ENCODE measurements at regions of chr6 and their contacts with region 1.

Region 1: GRCh38 chr6:30453508-30454116 is 35.7 kb upstream of the HLA-E start:
- DNase-seq: peak; percentile 80 to 85
- H3K4me3 ChIP-seq: no peak overlapping the region
- H3K4me3 Mint-ChIP-seq: no peak overlapping the region
- H3K27ac Mint-ChIP-seq: no peak overlapping the region
- H3K4me1 ChIP-seq: no peaks in the 10 kb centered on the region
- H3K4me1 Mint-ChIP-seq: no peaks in the 10 kb centered on the region
- H3K27me3 ChIP-seq: no peaks in the 10 kb centered on the region
- H3K27me3 Mint-ChIP-seq: peaks cover 32% of the 10 kb centered on the region
- CTCF ChIP-seq: peak; percentile 87 to 88

Region 2: DNA sequence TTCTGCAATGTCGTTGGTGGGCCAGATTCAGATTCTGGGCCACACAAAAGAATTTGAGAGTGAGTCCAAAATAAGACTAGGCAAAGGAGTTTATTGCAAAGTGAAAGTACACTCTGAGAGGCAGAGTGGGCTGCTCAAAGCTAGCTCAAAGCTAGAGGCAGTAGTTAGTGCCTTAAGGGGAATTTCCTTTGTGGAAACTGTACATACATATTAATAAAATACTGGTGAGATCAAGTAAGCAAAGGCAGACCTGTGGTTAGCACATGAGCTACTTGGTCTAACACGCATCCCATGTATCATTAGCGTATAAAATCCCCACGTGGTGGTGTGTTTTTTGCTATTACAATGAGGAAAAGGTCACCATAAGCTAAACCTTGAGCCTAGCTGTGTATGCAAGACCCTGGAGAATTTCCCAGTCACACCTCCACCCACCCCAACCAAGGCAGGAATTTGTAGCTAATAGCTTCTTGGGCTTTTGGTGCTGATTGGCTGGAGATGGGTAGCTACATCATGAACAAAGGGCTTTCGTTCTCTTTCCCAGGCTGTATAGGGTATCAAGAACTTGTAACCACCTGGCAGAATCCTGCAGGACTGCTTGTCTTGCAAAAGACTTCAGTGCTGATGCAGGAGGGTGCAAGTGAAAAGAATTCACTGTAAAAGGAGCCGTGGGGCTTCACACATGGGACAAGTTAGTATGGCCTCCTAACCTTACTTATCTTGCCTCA is 225.7 kb before region 1 on chr6:
- CTCF ChIA-PET with region 1: no interaction called
- POLR2A ChIA-PET with region 1: no interaction called
- intact Hi-C with region 1: no loop called
- DNase-seq: no peak
- H3K4me3 ChIP-seq: no peak overlapping the region
- H3K4me3 Mint-ChIP-seq: no peak overlapping the region
- H3K27ac Mint-ChIP-seq: no peak overlapping the region
- H3K4me1 ChIP-seq: no peaks in the 10 kb centered on the region
- H3K4me1 Mint-ChIP-seq: no peaks in the 10 kb centered on the region
- H3K27me3 ChIP-seq: no peaks in the 10 kb centered on the region
- H3K27me3 Mint-ChIP-seq: peaks cover 11% of the 10 kb centered on the region
- CTCF ChIP-seq: no peak

Region 3: DNA sequence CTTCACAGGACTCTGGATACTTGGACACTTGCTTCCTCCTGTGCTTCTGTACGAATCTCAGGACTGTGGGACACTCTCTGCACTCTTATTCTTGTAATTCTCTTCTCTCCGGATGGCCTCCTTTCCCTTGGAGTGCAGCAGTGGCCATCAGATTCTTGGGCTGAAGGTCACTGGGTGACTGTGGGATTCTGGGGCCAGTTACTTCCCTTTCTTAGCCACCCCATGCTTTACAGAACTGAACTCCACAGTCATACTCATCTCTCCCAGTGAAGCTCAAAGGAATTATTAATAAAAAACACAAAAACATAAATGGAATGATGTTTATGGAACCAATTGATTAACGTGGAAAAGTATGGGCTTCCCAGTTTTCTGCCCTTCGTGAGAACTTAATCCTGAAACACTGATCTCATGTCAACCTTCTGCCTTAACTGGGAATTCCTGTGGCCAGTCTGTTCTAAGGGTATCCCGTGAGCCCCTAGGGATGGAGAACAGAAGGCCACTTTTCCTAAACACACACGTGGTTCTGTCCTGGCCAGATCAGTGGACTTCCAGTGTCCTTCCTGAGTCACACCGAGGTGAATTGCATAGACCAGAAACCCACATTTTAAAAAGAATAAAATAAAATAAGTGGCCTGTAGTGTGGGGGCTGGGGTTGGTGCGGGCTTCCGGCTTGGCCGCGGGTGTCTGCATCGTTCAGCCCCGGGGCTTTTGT is 12.1 kb after region 1 on chr6:
- CTCF ChIA-PET with region 1: interaction called, 11 read pairs
- POLR2A ChIA-PET with region 1: no interaction called
- intact Hi-C with region 1: no loop called
- DNase-seq: no peak
- H3K4me3 ChIP-seq: no peak overlapping the region; the same call in 1 of the 2 replicates
- H3K4me3 Mint-ChIP-seq: peak overlapping the region; percentile 84
- H3K27ac Mint-ChIP-seq: no peak overlapping the region
- H3K4me1 ChIP-seq: no peaks in the 10 kb centered on the region
- H3K4me1 Mint-ChIP-seq: peaks cover 6% of the 10 kb centered on the region
- H3K27me3 ChIP-seq: peaks cover 8% of the 10 kb centered on the region
- H3K27me3 Mint-ChIP-seq: peaks cover 54% of the 10 kb centered on the region
- CTCF ChIP-seq: no peak

Measured in Caco-2 (cell line).